Naive thymus-derived CD4-positive, alpha-beta T cell (primary cell): ENCODE measurements at regions of chr3 and their contacts with region 1.

Region 1: DNA sequence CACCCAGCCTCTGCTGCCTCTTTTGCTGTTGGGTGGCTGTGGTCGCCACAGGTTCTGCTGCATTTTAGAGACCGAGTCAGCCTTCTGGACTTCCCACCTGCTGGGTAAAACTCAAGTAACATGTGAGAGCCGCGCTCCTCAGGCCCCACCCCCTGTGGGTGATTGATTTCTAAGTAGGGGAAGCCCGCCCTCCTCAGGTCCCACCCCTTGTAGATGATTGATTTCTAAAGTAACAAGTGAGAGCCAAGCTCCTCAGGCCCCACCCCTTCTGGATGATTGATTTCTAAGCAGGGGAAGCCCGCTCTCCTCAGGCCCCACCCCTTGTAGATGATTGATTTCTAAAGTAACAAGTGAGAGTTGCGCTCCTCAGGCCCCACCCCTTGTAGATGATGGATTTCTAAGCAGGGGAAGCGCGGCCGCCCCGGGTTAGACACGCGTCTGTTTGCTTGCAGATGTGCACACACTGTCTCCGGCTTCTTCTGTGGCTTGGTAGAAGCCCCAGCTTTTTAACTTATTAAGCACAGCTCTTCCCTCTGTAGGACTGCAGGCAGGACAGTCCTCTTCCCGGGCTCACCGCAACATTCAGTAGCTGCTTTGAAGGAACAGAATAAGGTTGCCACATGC is 83.4 kb downstream of the FAM43A start:
- DNase-seq: peak; percentile 59 to 98 (median 93)
- ATAC-seq: peak; percentile 99
- H3K4me3 ChIP-seq: peak overlapping the region; percentile 70
- H3K4me3 Mint-ChIP-seq: peak overlapping the region; percentile 77 to 95 (median 88)
- H3K27ac ChIP-seq: peak overlapping the region; percentile 78
- H3K27ac Mint-ChIP-seq: peak overlapping the region; percentile 57 to 98 (median 94)
- H3K4me1 ChIP-seq: peaks cover 6 to 9% of the 10 kb centered on the region in 2 donors
- H3K4me1 Mint-ChIP-seq: peaks cover 8 to 35% (median 23%) of the 10 kb centered on the region in 7 donors
- H3K27me3 ChIP-seq: no peaks in the 10 kb centered on the region
- H3K27me3 Mint-ChIP-seq: peaks cover 0 to 23% (median 7%) of the 10 kb centered on the region in 5 donors

Region 2: GRCh38 chr3:194486540-194487288 is 282.4 kb before region 1 on chr3 and contains the start of gene ATP13A3:
- CTCF ChIA-PET with region 1: no interaction called
- POLR2A ChIA-PET with region 1: no interaction called
- intact Hi-C with region 1: loop called (anchors 1 to 2 kb)
- DNase-seq: peak; percentile 84 to 93 (median 91)
- ATAC-seq: peak; percentile 93
- H3K4me3 ChIP-seq: peak within 1 kb of the TSS; percentile 83
- H3K4me3 Mint-ChIP-seq: peak within 1 kb of the TSS; percentile 83 to 98 (median 93)
- H3K27ac ChIP-seq: peak within 1 kb of the TSS; percentile 82
- H3K27ac Mint-ChIP-seq: peak within 1 kb of the TSS; percentile 82 to 96 (median 94)
- H3K4me1 ChIP-seq: peaks cover 20 to 25% of the 10 kb centered on the region in 2 donors
- H3K4me1 Mint-ChIP-seq: peaks cover 41 to 60% (median 45%) of the 10 kb centered on the region in 7 donors
- H3K27me3 ChIP-seq: no peaks in the 10 kb centered on the region
- H3K27me3 Mint-ChIP-seq: no peaks in the 10 kb centered on the region
- total RNA-seq, gene ATP13A3: 46.5 to 81.8 (median 58.4) TPM

Region 3: DNA sequence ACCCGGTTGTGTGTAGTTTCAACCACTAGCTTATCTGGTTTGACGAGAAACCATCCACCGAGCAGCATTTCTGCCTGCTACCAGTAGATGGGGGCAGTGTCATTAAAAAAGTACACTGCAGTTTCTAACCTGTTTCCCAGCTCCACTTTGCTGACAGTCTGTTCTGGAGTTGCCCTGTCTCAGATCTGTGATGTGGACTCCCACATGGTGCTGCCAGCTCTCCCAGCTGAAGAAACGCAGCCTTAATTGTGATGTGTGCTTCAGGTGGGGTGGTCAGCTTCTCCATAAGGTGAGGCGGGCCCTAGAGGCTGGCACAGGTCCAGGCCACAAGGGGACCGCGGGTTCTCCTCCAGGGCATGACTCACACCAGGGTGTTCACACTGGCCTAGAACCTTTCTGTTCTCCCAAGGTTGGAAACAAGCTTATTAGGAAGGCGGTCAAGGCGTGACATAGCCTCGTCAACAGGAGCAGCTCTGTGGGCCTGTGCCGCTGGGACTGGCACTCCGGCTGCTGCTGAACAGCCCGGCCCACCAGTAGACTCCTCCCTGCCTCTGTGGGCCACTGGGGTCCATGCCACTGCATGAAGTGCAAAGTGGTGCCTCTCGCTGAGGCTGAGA is 86.3 kb before region 1 on chr3:
- CTCF ChIA-PET with region 1: no interaction called
- POLR2A ChIA-PET with region 1: interaction called, 4 read pairs
- intact Hi-C with region 1: loop called (anchors 1 kb)
- DNase-seq: peak; percentile 33 to 75 (median 60)
- ATAC-seq: peak; percentile 77
- H3K4me3 ChIP-seq: no peak overlapping the region
- H3K4me3 Mint-ChIP-seq: peak overlapping the region in 2 of 10 donors; percentile 12 to 25
- H3K27ac ChIP-seq: no peak overlapping the region
- H3K27ac Mint-ChIP-seq: peak overlapping the region in 1 of 9 donors; percentile 25
- H3K4me1 ChIP-seq: peaks cover 12 to 14% of the 10 kb centered on the region in 2 donors
- H3K4me1 Mint-ChIP-seq: peaks cover 10 to 41% (median 28%) of the 10 kb centered on the region in 7 donors
- H3K27me3 ChIP-seq: no peaks in the 10 kb centered on the region
- H3K27me3 Mint-ChIP-seq: peaks cover 0 to 37% (median 0%) of the 10 kb centered on the region in 5 donors

Region 4: GRCh38 chr3:195259475-195260279 is 490.5 kb after region 1 on chr3:
- CTCF ChIA-PET with region 1: no interaction called
- POLR2A ChIA-PET with region 1: no interaction called
- intact Hi-C with region 1: loop called (anchors 1 kb)
- DNase-seq: peak; percentile 80 to 90 (median 84)
- ATAC-seq: peak; percentile 94
- H3K4me3 ChIP-seq: peak overlapping the region; percentile 36
- H3K4me3 Mint-ChIP-seq: peak overlapping the region; percentile 32 to 84 (median 64)
- H3K27ac ChIP-seq: peak overlapping the region; percentile 73
- H3K27ac Mint-ChIP-seq: peak overlapping the region in 7 of 9 donors; percentile 46 to 88 (median 84)
- H3K4me1 ChIP-seq: peaks cover 17 to 19% of the 10 kb centered on the region in 2 donors
- H3K4me1 Mint-ChIP-seq: peaks cover 13 to 24% (median 19%) of the 10 kb centered on the region in 7 donors
- H3K27me3 ChIP-seq: no peaks in the 10 kb centered on the region
- H3K27me3 Mint-ChIP-seq: no peaks in the 10 kb centered on the region